Activated T-helper 2 cell treated with anti-CD3 and anti-CD28 coated beads, Interferon-gamma antibody, Interleukin-2, Interleukin-4, amounts not matched to agents 10 μg/mL and 5 μg/mL and 100 μg/mL, durations not matched to agents 14 hours and 24 hours and 36 hours (primary cell): ENCODE measurements at regions of chr13 and their contacts with region 1.

Region 1: GRCh38 chr13:86870444-86870843 is 800.7 kb upstream of the SLITRK5 start:
- DNase-seq: no peak
- H3K4me3 Mint-ChIP-seq: no peak overlapping the region
- H3K27ac Mint-ChIP-seq: no peak overlapping the region
- H3K4me1 Mint-ChIP-seq: no peaks in the 10 kb centered on the region
- H3K27me3 Mint-ChIP-seq: no peaks in the 10 kb centered on the region

Region 2: DNA sequence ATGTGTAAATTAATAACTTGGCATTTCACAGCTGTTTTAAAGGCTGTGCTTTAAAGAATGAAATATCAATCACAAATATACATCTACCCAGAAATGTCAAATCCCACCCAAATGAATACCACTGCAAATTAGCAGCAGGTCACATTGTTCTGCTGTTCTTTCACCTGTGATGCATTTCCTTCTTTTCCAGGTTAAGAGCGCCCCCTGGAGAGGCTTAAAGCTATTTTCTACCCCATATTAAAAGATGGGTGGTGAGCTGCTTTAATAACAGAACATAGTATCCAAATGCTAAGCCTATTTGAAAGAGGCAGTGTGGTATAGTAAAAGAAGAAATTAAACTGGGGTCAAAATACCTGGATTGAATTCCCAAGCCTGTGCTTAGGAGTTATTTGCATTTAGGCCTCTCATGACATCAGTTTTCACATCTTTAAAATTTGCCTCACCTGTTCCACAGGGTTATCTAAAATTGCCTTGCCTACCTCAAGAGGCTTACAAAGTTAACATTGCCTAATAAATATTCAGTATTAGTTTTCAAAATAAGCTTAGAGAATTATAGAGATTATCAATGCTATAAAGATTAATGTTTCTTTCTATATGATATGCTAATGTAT is 403.9 kb after region 1 on chr13:
- intact Hi-C with region 1: loop called (anchors 5 kb)
- DNase-seq: no peak
- H3K4me3 Mint-ChIP-seq: no peak overlapping the region
- H3K27ac Mint-ChIP-seq: no peak overlapping the region
- H3K4me1 Mint-ChIP-seq: no peaks in the 10 kb centered on the region
- H3K27me3 Mint-ChIP-seq: no peaks in the 10 kb centered on the region